GM13977 (cell line): ENCODE measurements at regions of chr7 and their contacts with region 1.

Region 1: GRCh38 chr7:54788664-54789063 is 29.7 kb upstream of the SEC61G start:
- DNase-seq: peak; percentile 70
- CTCF ChIP-seq: peak; percentile 64

Region 2: GRCh38 chr7:54758702-54759592 is 29.7 kb before region 1 on chr7 and contains the start of gene SEC61G:
- in situ Hi-C with region 1: no loop called
- DNase-seq: peak; percentile 95
- CTCF ChIP-seq: no peak

Region 3: GRCh38 chr7:55265836-55266642 is 477.4 kb after region 1 on chr7:
- in situ Hi-C with region 1: loop called (anchors 10 kb)
- DNase-seq: no peak
- CTCF ChIP-seq: no peak

Region 4: DNA sequence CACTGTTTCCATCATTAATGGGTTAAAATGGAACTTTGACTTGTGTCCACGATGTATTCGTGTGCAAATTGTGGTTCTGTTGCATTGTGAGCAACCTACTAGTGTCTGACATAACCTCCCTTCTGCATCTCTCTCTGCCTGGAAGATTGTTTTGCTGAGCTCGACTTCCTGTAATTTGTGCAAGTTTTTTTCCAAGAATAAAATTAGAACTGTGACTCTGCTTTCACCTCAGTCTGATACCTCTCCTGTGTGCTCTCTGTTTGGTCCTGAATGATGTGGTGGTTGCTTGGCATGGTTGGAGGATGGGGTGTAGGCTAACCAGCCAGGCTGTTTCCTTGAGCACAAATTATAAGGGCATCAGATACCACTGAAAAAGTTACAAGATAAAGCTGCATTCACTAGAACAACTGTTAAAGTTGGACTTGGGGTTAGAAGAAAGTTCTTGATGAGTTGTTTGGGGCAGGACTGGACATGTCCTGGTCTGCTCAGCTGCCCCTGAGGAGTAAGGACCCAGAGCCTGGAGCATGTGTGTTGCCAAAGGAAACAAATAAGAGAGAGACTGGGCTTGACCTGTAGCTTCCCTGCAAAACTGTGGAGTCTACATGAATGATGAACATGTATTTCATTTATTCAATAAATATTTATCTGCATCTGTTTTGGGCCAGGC is 785.5 kb after region 1 on chr7:
- in situ Hi-C with region 1: no loop called
- DNase-seq: no peak
- CTCF ChIP-seq: no peak